Psoas muscle (tissue), 8 donors: ENCODE measurements at regions of chr13 and their contacts with region 1.

Region 1: GRCh38 chr13:99442273-99442895 is 58.9 kb upstream of the TM9SF2 start:
- DNase-seq: no peak
- ATAC-seq: peak in 3 of 4 donors; percentile 63 to 75 (median 74)
- H3K4me3 ChIP-seq: no peak overlapping the region
- H3K27ac ChIP-seq: no peak overlapping the region
- H3K4me1 ChIP-seq: no peaks in the 10 kb centered on the region
- H3K27me3 ChIP-seq: peaks cover 0 to 3% (median 0%) of the 10 kb centered on the region in 3 donors
- CTCF ChIP-seq: peak; percentile 97

Region 2: DNA sequence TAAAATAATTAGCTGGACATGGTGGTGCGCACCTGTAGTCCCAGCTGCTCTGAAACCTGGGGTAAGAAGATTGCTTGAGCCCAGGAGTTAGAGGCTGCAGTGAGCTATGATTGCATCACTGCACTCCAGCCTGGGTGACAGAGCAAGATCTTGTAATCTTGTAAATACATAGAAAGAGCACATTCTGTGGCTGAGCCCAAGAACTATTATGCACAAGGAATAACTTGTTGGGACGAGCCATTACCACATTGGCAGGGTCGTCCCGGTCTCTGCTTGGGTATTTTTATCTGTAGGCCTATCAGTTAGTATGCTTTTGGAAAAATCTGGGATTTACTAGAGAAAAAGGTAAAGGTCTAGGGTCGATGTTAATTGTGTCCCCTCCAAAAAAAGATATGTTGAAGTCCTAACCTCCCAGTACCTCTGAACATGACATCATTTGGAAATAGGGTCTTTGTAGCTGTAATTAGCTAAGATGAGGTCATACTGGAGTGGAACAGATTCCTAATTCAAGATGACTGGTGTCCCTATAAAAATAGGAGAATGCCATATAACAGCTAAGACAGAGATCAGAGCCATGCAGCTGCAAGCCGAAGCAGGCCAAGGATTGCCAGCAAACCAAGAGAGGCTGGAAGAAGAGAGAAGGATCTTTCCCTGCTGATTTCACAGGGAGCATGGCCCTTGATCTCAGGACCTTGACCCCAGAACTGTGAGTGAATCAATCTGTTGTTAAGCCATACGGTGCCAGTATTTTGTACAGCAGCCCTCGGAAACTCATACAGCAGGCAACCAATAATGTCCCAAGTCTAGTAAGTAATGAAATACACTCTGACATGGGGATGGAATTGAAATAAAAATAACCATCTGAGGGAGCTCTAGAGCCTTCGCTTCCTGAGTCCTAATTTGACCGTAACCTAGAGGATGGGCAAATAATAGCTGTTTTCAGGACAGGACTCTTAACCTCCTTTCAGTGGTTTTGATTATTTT is 135.8 kb after region 1 on chr13:
- intact Hi-C with region 1: no loop called
- DNase-seq: no peak
- ATAC-seq: no peak
- H3K4me3 ChIP-seq: no peak overlapping the region
- H3K27ac ChIP-seq: no peak overlapping the region
- H3K4me1 ChIP-seq: no peaks in the 10 kb centered on the region
- H3K27me3 ChIP-seq: peaks cover 0 to 6% (median 0%) of the 10 kb centered on the region in 3 donors
- CTCF ChIP-seq: no peak

Region 3: GRCh38 chr13:99617474-99618255 is 175.3 kb after region 1 on chr13:
- intact Hi-C with region 1: loop called in 1 of 2 experiments (anchors 10 kb)
- DNase-seq: peak in 1 of 2 donors; percentile 23
- ATAC-seq: peak; percentile 43 to 86 (median 75)
- H3K4me3 ChIP-seq: no peak overlapping the region
- H3K27ac ChIP-seq: no peak overlapping the region
- H3K4me1 ChIP-seq: peaks cover 20% of the 10 kb centered on the region
- H3K27me3 ChIP-seq: no peaks in the 10 kb centered on the region
- CTCF ChIP-seq: peak; percentile 55

Region 4: GRCh38 chr13:100182900-100183490 is 740.6 kb after region 1 on chr13:
- intact Hi-C with region 1: no loop called
- DNase-seq: no peak
- ATAC-seq: no peak
- H3K4me3 ChIP-seq: no peak overlapping the region
- H3K27ac ChIP-seq: no peak overlapping the region
- H3K4me1 ChIP-seq: no peaks in the 10 kb centered on the region
- H3K27me3 ChIP-seq: no peaks in the 10 kb centered on the region
- CTCF ChIP-seq: no peak